ENCODE measurements at regions of chr22 and their contacts with region 1.

Region 1: DNA sequence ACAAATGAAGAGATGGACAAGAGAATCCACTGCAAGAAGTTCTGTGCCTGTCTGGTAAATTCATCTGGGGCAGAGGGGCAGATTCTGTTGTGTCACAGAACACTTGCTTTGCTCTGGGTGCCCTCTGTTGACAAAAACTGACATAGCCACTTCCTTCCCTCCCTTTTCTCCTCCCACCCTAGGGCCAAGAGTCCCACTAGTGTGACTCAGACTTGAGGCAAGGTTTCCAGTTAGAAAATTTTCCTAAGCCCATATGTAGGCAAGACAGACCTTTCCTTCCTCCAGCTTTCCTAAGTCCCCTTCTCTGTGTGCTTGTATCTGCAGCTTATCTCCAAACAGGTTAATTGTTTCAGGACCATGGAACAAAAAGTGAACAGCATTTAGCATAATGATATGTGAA is 106.8 kb downstream of the RBFOX2 start:
- DNase-seq: peak; percentile 13 to 74 (median 32)
- ATAC-seq: peak; percentile 92
- H3K4me3 ChIP-seq: no peak overlapping the region
- H3K27ac ChIP-seq: no peak overlapping the region
- H3K4me1 ChIP-seq: no peaks in the 10 kb centered on the region; a peak in 2 of 5 replicates
- H3K27me3 ChIP-seq: no peaks in the 10 kb centered on the region
- CTCF ChIP-seq: peak; percentile 64 to 79 (median 67)
- EP300 ChIP-seq: no peak
- POLR2A ChIP-seq: no peak
- RAD21 ChIP-seq: peak; percentile 81 to 88

Region 2: GRCh38 chr22:35684270-35684700 is 237.5 kb before region 1 on chr22:
- CTCF ChIA-PET with region 1: no interaction called
- POLR2A ChIA-PET with region 1: no interaction called
- in situ Hi-C with region 1: no loop called
- intact Hi-C with region 1: loop called (anchors 1 kb)
- DNase-seq: peak in 2 of 4 experiments; percentile 14 to 25
- ATAC-seq: peak; percentile 64
- H3K4me3 ChIP-seq: no peak overlapping the region
- H3K27ac ChIP-seq: no peak overlapping the region
- H3K4me1 ChIP-seq: no peaks in the 10 kb centered on the region
- H3K27me3 ChIP-seq: no peaks in the 10 kb centered on the region
- CTCF ChIP-seq: peak; percentile 41 to 59 (median 53); a peak in 4 of 6 replicates
- EP300 ChIP-seq: no peak
- POLR2A ChIP-seq: no peak
- RAD21 ChIP-seq: peak; percentile 50 to 68

Region 3: GRCh38 chr22:35894937-35895708 is 26.7 kb before region 1 on chr22:
- CTCF ChIA-PET with region 1: no interaction called
- POLR2A ChIA-PET with region 1: no interaction called
- in situ Hi-C with region 1: no loop called
- intact Hi-C with region 1: no loop called
- DNase-seq: no peak
- ATAC-seq: no peak
- H3K4me3 ChIP-seq: no peak overlapping the region
- H3K27ac ChIP-seq: no peak overlapping the region
- H3K4me1 ChIP-seq: peaks cover 0 to 8% of the 10 kb centered on the region in 2 experiments; a peak in 2 of 5 replicates
- H3K27me3 ChIP-seq: no peaks in the 10 kb centered on the region
- CTCF ChIP-seq: no peak
- EP300 ChIP-seq: no peak
- POLR2A ChIP-seq: no peak
- RAD21 ChIP-seq: no peak

Measured in K562 (cell line).